ENCODE measurements at regions of chr11 and their contacts with region 1.

Region 1: GRCh38 chr11:46800177-46800576 is 45.9 kb downstream of the CKAP5 start:
- DNase-seq: no peak
- ATAC-seq: peak in 3 of 8 donors; percentile 63 to 76 (median 75)
- H3K4me3 ChIP-seq: no peak overlapping the region
- H3K27ac ChIP-seq: peak overlapping the region in 3 of 10 donors; percentile 15 to 27 (median 24)
- H3K4me1 ChIP-seq: peaks cover 0 to 17% (median 0%) of the 10 kb centered on the region in 9 donors
- H3K27me3 ChIP-seq: no peaks in the 10 kb centered on the region
- CTCF ChIP-seq: no peak

Region 2: DNA sequence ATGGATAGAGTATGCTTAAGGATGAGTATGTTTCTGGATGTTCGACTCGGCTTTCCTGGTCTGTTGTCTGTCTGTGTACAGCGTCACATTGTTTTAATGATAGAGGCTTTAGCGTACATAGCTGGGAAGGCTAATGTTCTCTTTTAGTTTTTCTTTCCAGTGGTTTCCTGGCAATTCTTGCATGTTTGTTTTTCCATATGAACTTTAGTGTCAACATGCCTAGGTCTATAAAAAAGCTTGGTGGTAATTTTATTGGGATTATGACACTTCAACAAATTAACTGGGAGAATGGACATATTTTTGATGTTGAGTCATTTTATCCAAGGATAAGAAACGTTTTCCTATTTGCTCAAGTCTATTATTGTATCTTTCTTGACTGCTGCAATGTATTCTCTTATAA is 63.6 kb before region 1 on chr11:
- intact Hi-C with region 1: no loop called
- DNase-seq: no peak
- ATAC-seq: no peak
- H3K4me3 ChIP-seq: no peak overlapping the region
- H3K27ac ChIP-seq: no peak overlapping the region
- H3K4me1 ChIP-seq: peaks cover 0 to under 1% (median 0%) of the 10 kb centered on the region in 9 donors
- H3K27me3 ChIP-seq: no peaks in the 10 kb centered on the region
- CTCF ChIP-seq: no peak

Region 3: GRCh38 chr11:46755962-46756361 is 44.2 kb before region 1 on chr11:
- intact Hi-C with region 1: loop called in 1 of 10 experiments (anchors 5 kb)
- DNase-seq: no peak
- ATAC-seq: no peak
- H3K4me3 ChIP-seq: no peak overlapping the region
- H3K27ac ChIP-seq: no peak overlapping the region
- H3K4me1 ChIP-seq: no peaks in the 10 kb centered on the region
- H3K27me3 ChIP-seq: no peaks in the 10 kb centered on the region
- CTCF ChIP-seq: no peak

Measured in heart right ventricle (tissue), 16 donors.